ENCODE measurements at regions of chr2 and their contacts with region 1.

Region 1: DNA sequence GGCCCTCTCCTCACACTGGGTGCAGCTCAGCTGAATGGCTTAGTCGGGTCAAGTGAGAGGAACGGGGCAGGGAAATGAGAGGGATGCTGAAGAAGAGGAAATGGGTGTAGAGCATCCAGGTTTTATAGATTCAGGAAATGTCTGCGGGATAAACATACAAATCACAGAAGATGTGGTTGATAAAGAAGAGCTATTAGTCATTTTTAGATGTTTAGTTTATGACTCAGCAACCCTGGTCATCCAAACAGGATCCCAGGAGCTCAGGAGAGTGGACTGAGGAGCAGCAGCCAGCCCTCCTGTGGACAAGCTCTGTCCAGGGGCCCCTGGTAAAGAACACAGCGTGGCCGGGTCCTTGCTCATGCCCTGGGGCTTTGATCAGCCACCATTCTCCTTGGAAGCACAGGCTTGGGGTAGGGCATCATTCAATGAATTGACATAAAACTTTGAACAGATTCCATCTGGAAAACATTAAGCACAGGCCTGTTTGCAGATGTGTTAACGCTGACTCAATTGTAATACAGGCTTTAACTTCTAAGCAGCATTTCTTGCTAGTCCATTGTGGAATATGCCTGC is 83.0 kb downstream of the NPAS2 start:
- DNase-seq: peak; percentile 90
- H3K4me3 Mint-ChIP-seq: no peak overlapping the region
- H3K27ac Mint-ChIP-seq: no peak overlapping the region
- H3K4me1 Mint-ChIP-seq: peaks cover 28% of the 10 kb centered on the region
- H3K27me3 Mint-ChIP-seq: no peaks in the 10 kb centered on the region
- CTCF ChIP-seq: no peak

Region 2: DNA sequence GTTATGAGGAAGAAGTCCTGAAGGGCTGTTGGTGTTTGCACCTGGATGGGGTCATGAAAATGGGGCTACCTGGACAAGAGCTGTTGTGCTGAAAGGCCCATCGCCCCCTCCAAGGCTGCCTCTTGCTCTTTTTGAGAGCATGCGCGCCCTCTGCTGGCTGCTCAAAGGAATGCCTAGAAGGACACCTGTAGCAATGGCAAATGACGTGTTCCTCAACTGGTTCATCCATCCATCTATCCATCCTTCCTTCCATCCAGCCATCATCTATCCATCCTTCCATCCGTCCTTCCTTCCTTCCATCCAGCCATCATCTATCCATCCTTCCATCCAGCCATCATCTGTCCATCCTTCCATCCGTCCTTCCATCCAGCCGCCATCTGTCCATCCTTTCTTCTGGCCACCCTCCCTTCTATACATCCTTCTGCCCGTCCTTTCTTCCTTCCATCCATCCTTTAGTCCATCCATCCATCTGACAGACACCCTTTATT is 82.0 kb after region 1 on chr2:
- CTCF ChIA-PET with region 1: interaction called, 5 read pairs
- POLR2A ChIA-PET with region 1: no interaction called
- intact Hi-C with region 1: loop called (anchors 5 kb)
- DNase-seq: peak; percentile 75
- H3K4me3 Mint-ChIP-seq: no peak overlapping the region
- H3K27ac Mint-ChIP-seq: no peak overlapping the region
- H3K4me1 Mint-ChIP-seq: peaks cover 5% of the 10 kb centered on the region
- H3K27me3 Mint-ChIP-seq: no peaks in the 10 kb centered on the region
- CTCF ChIP-seq: peak; percentile 91